MCF 10A (cell line): ENCODE measurements at regions of chr10 and their contacts with region 1.

Region 1: GRCh38 chr10:114103284-114103683 is 59.6 kb downstream of the ADRB1 start:
- DNase-seq: peak; percentile 66
- H3K4me3 Mint-ChIP-seq: no peak overlapping the region
- H3K27ac Mint-ChIP-seq: no peak overlapping the region
- H3K4me1 Mint-ChIP-seq: no peaks in the 10 kb centered on the region
- H3K27me3 Mint-ChIP-seq: no peaks in the 10 kb centered on the region
- CTCF ChIP-seq: peak; percentile 46

Region 2: DNA sequence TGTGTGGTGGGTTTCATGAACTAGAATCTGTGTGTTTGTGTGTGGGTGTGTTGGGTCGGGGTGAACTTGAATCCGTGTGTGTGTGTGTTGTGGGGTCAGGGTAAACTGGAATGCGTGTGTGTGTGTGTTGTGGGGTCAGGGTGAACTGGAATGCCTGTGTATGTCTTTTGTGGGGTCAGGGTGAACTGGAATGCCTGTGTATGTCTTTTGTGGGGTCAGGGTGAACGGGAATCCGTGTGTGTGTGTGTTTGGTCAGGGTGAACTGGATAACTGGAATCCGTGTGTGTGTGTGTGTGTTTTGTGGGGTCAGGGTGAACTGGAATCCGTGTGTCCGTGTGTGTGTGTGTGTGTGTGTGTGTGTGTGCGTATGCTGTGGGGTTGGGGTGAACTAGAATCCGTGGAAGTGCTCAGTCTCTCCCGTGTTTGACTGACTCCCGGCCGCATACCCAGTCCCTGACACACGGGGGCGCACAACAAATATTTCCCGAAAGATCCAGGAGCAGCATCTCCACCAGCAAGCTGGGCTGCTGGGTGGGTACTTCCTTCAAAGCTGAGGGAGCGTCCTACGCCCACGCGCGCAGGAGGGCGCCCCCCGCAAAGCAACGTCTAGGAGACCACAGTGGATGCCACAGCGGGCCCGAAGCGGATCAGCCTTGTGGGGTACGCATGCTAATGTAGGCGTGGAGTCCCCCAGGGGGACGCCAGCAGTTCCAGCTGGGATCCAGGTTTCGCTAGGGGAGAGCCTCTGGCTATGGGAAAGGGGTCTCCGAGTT is 424.4 kb before region 1 on chr10:
- CTCF ChIA-PET with region 1: no interaction called
- POLR2A ChIA-PET with region 1: no interaction called
- intact Hi-C with region 1: loop called (anchors 2 kb)
- DNase-seq: peak; percentile 88
- H3K4me3 Mint-ChIP-seq: peak overlapping the region; percentile 78
- H3K27ac Mint-ChIP-seq: peak overlapping the region; percentile 97
- H3K4me1 Mint-ChIP-seq: peaks cover 9% of the 10 kb centered on the region
- H3K27me3 Mint-ChIP-seq: peaks cover 12% of the 10 kb centered on the region
- CTCF ChIP-seq: peak; percentile 37

Region 3: DNA sequence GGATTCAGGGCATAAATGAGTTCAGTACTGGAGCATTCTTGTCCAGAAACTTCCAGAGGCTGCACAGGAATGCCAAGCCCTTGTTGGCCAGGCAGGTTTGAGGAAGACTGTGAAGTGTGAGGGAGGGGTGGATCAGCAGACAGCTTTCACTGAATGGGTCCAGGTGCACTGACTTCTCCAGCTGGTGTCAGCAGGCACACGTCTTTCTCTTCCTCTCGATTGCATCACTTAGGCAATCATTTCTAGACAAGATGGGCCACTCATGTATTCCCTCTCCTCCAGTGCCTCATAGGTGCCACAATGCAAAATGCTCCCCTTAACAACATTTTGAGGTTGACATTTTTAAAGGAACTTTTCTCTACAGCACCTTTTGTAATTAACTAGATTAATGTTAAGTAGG is 367.4 kb before region 1 on chr10:
- CTCF ChIA-PET with region 1: interaction called, 4 read pairs
- POLR2A ChIA-PET with region 1: interaction called, 3 read pairs
- intact Hi-C with region 1: loop called (anchors 1 kb)
- DNase-seq: peak; percentile 35
- H3K4me3 Mint-ChIP-seq: no peak overlapping the region
- H3K27ac Mint-ChIP-seq: no peak overlapping the region
- H3K4me1 Mint-ChIP-seq: no peaks in the 10 kb centered on the region
- H3K27me3 Mint-ChIP-seq: peaks cover 17% of the 10 kb centered on the region
- CTCF ChIP-seq: no peak

Region 4: DNA sequence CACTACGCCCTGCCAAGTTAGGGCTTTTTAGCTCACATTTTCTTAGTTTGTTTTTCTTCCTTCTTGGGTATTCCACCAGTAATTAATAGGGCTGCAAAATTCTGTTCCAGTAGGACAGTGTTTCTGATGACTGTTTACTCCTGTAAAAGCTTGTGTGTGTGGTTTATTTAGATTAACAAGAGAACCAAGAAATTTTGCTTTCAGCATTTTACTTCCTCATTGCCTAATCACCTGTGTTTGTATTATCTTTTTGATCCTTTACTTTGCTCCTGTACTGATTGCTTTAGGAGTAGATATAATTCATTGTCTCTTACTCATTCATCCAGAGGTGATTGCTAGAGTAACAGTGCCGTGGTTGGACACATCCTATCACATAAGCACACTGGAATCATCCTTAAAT is 103.6 kb after region 1 on chr10:
- CTCF ChIA-PET with region 1: no interaction called
- POLR2A ChIA-PET with region 1: no interaction called
- intact Hi-C with region 1: no loop called
- DNase-seq: no peak
- H3K4me3 Mint-ChIP-seq: no peak overlapping the region
- H3K27ac Mint-ChIP-seq: no peak overlapping the region
- H3K4me1 Mint-ChIP-seq: no peaks in the 10 kb centered on the region
- H3K27me3 Mint-ChIP-seq: no peaks in the 10 kb centered on the region
- CTCF ChIP-seq: no peak